ENCODE measurements at regions of chr16 and their contacts with region 1.

Region 1: GRCh38 chr16:10937068-10937859 is 5.0 kb downstream of the DEXI start:
- DNase-seq: no peak
- CTCF ChIP-seq: no peak

Region 2: GRCh38 chr16:10902999-10903398 is 34.3 kb before region 1 on chr16:
- CTCF ChIA-PET with region 1: no interaction called
- POLR2A ChIA-PET with region 1: no interaction called
- DNase-seq: no peak
- CTCF ChIP-seq: no peak

Region 3: DNA sequence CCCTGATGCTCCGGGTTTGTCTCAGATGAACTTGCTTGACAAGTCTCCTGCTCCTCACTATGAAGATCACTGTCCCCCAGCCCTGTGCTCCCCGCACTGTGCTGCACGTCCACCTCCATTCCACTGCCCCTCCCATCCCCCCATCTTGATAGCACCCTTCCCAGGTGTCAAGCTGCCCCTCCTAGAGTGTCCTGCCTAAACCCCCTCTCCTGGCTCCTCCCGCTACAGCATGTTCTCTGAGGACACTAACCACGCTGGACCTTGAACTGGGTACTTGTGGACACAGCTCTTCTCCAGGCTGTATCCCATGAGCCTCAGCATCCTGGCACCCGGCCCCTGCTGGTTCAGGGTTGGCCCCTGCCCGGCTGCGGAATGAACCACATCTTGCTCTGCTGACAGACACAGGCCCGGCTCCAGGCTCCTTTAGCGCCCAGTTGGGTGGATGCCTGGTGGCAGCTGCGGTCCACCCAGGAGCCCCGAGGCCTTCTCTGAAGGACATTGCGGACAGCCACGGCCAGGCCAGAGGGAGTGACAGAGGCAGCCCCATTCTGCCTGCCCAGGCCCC is 13.5 kb before region 1 on chr16:
- CTCF ChIA-PET with region 1: interaction called, 16 read pairs
- POLR2A ChIA-PET with region 1: interaction called, 8 read pairs
- DNase-seq: no peak
- CTCF ChIP-seq: no peak